ENCODE measurements at regions of chr11 and their contacts with region 1.

Region 1: DNA sequence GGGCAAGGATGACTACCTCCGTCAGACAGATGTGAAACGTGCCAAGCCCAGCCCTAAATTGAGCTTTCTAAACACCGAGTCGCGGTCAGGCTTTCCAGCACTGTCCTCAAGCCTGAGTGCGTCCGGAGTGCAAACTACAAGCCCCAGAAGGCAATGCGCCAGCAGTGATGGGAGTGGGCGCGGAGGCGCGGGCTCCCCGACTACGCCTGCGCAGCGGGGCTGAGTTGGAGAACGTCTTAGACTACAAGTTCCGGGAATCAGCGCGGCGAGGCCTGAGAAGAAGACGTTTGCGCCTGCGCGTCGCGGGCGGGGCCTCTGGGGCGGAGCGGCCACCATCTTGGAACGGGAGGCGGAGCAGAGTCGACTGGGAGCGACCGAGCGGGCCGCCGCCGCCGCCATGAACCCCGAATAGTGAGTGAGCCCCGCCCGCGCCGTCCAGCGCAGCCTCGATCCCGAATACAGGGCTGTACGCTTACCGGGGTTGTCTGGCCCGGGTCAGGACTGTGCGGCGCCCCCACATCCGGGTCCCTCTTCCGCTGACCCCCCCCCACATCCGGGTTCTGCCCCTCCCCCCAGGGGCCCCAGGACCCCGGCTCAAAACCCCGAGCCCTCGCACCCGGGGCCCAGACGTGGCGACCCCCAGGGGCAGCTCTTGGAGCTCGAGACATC is at the start of gene RAB1B:
- DNase-seq: peak; percentile 99
- H3K4me3 ChIP-seq: peak within 1 kb of the TSS; percentile 73 to 91 (median 81)
- H3K27ac ChIP-seq: peak within 1 kb of the TSS; percentile 54
- H3K4me1 ChIP-seq: peaks cover 21% of the 10 kb centered on the region
- H3K27me3 ChIP-seq: no peaks in the 10 kb centered on the region
- CTCF ChIP-seq: no peak
- total RNA-seq, gene RAB1B: 79.5 to 169 TPM

Region 2: DNA sequence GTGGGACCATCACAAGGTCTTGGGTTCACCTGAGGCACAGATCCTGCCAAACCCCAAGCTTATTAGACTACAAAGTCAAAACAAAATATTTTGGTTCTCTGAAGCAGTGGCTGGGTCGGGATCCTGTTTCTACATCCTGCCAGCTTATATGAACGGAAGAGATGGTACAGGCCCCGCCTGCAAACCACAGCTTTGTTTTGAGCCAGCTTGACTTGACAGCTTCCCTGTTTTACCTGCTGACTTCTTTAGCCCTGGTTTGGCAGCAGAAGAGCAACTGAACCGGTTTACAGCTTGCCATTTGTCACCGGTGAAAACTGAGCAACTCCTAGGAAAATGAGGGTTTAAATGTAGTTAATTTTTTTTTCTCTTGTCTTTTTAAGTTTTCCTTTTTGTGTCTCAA is 186.9 kb before region 1 on chr11:
- CTCF ChIA-PET with region 1: interaction called, 14 read pairs
- dilution Hi-C with region 1: no loop called
- in situ Hi-C with region 1: no loop called
- intact Hi-C with region 1: no loop called
- DNase-seq: peak; percentile 77
- H3K4me3 ChIP-seq: no peak overlapping the region
- H3K27ac ChIP-seq: peak overlapping the region; percentile 43
- H3K4me1 ChIP-seq: peaks cover 21% of the 10 kb centered on the region
- H3K27me3 ChIP-seq: no peaks in the 10 kb centered on the region
- CTCF ChIP-seq: no peak

Region 3: GRCh38 chr11:66126808-66127555 is 141.4 kb before region 1 on chr11:
- CTCF ChIA-PET with region 1: no interaction called
- dilution Hi-C with region 1: no loop called
- in situ Hi-C with region 1: no loop called
- intact Hi-C with region 1: no loop called
- DNase-seq: peak; percentile 87
- H3K4me3 ChIP-seq: peak overlapping the region in 2 of 3 experiments; percentile 0 to 4
- H3K27ac ChIP-seq: peak overlapping the region; percentile 56
- H3K4me1 ChIP-seq: peaks cover 27% of the 10 kb centered on the region
- H3K27me3 ChIP-seq: no peaks in the 10 kb centered on the region
- CTCF ChIP-seq: no peak

Region 4: DNA sequence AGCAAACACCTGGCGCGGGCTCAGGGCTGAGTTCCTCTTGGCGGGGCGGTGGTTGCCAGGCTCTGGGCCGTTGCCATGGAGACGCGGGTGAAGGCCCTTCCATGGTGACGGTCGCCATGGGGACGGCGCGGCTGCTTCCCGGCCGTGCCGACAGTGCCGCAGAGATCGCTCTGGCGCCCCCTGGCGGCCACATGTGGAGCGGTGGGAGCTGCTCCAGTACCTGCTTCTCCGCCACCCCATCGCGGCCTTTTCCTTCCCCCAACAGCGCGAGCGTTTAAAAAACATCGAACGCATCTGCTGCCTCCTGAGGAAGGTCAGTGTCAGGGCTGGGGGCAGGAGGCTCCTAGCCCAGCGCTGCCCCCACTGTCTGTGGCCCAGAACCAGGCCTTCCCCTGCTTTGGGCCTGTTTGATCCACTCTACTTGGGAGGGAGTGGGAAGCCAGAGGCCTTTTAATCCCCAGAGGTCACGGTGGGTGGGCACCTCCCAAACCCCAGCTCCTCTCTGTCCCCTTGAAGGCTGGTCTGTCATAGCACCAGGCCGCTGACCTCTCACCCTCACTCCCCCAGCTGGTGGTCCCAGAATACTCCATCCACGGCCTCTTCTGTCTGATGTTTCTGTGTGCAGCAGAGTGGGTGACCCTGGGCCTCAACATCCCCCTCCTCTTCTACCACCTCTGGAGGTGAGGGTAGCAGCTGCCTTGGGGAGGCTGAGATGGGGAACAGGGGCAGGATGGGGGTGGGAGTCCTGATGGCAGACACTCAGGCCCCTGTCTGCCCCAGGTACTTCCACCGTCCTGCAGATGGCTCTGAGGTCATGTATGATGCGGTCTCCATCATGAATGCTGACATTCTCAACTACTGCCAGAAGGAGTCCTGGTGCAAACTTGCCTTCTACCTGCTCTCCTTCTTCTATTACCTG is 14.3 kb after region 1 on chr11:
- CTCF ChIA-PET with region 1: no interaction called
- dilution Hi-C with region 1: no loop called
- in situ Hi-C with region 1: no loop called
- intact Hi-C with region 1: loop called (anchors 1 kb)
- DNase-seq: peak; percentile 85
- H3K4me3 ChIP-seq: no peak overlapping the region
- H3K27ac ChIP-seq: no peak overlapping the region
- H3K4me1 ChIP-seq: peaks cover 5% of the 10 kb centered on the region
- H3K27me3 ChIP-seq: no peaks in the 10 kb centered on the region
- CTCF ChIP-seq: peak; percentile 78 to 93

Region 5: GRCh38 chr11:66288671-66289547 is 20.5 kb after region 1 on chr11 and contains the start of gene YIF1A:
- CTCF ChIA-PET with region 1: no interaction called
- dilution Hi-C with region 1: no loop called
- in situ Hi-C with region 1: no loop called
- intact Hi-C with region 1: loop called (anchors 1 kb)
- DNase-seq: peak; percentile 100
- H3K4me3 ChIP-seq: peak within 1 kb of the TSS; percentile 73 to 75 (median 73)
- H3K27ac ChIP-seq: peak within 1 kb of the TSS; percentile 73
- H3K4me1 ChIP-seq: peaks cover 19% of the 10 kb centered on the region
- H3K27me3 ChIP-seq: peaks cover 6% of the 10 kb centered on the region
- CTCF ChIP-seq: no peak
- total RNA-seq, gene YIF1A: 103 to 125 TPM

Region 6: DNA sequence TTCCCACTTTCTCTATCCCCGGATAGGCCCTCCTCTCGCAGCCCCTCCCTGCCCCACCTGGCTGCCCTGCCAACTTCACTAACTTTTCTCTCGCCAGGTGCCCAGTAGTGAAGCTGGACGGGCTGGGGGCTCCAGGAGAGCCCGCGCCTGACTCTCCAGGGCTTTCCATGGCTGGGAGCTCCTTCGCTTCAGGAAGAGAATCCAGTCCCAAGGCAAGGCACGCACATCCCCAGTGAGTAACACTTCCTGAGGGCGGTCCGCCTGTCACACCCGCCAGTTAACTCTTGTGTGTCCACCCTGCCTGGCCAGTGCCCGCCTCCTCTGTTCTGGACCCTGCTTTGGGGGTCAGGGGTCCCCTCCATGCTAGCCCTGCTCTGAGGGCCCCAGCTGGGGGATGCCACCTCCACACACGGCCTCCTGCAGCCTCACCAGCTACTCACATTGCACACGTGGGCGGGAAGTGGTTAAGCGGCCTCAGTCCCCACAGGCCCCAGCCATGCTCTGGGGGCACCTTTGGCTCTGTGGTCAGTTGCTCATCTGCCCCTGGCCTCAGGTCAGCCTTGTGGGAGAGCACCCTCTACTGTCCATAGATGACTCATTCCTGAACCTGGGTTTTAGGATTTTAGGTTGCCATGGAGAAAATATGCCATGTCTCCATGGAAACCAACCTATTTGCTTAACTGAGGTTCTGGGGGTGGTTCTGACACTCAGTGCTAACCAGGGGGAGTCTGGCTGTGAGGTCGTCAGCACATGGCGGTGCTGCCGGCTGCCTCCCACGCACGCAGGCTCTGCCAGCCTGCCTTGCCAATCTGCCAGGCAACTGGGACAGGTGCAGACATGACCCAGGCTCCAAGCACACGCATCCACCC is 68.1 kb after region 1 on chr11 and contains the start of gene RIN1:
- CTCF ChIA-PET with region 1: no interaction called
- dilution Hi-C with region 1: loop called (anchors 5 kb)
- in situ Hi-C with region 1: no loop called
- intact Hi-C with region 1: no loop called
- DNase-seq: peak; percentile 99
- H3K4me3 ChIP-seq: peak within 1 kb of the TSS; percentile 40 to 78 (median 70)
- H3K27ac ChIP-seq: peak within 1 kb of the TSS; percentile 87
- H3K4me1 ChIP-seq: peaks cover 52% of the 10 kb centered on the region
- H3K27me3 ChIP-seq: no peaks in the 10 kb centered on the region
- CTCF ChIP-seq: peak in 1 of 2 donors; percentile 19
- total RNA-seq, gene RIN1: 28.5 to 75.6 TPM

Region 7: GRCh38 chr11:66686801-66687750 is 418.7 kb after region 1 on chr11:
- CTCF ChIA-PET with region 1: no interaction called
- dilution Hi-C with region 1: no loop called
- in situ Hi-C with region 1: no loop called
- intact Hi-C with region 1: no loop called
- DNase-seq: peak; percentile 88
- H3K4me3 ChIP-seq: peak overlapping the region in 2 of 3 experiments; percentile 31 to 39
- H3K27ac ChIP-seq: peak overlapping the region; percentile 90
- H3K4me1 ChIP-seq: peaks cover 26% of the 10 kb centered on the region
- H3K27me3 ChIP-seq: no peaks in the 10 kb centered on the region
- CTCF ChIP-seq: peak in 1 of 2 donors; percentile 22